ENCODE measurements at regions of chr1 and their contacts with region 1.

Region 1: DNA sequence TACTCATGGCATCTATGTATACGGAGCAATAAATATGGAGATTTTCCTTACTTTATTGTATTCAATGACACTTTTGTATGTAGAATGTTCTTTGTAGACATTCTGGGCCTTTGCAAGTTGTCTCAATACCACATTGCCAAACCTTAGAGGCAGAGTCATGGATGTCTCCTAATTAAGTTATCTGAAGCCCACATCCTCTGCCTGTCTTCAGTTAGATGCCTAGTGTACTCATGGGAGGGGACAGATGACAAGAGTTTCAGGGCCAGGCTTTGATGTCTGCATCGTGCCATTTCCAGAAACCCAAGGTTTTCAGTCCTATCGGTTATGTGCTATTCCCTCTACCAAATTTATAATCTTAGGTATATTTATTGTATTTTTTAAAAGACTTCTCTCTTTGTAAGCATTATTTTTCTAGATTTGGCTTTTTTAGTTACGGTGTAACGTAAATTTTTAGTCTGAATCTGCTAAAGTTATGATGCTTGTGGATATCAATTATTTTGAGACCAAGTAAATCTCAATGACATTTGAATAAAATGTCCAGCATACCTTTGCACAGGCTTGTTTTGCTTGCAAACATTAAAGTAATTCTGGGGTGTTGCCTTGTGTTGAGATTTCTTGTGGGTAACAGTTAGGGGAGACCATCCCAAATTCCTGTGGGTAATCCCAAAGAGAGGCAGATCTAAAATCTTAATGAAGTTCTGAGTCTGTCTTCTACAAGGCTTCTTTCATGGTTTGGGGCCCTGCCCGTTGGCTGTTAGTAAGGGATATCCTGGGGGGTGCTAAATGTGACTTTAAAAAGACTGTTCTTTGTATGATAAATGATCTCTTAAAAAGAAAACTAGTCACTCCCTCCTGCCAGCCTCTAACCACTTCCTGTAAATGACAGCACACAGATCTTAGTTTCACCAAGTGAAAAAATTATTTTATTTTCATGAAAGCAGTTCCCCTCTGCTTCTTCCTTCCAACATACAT is 8.0 kb upstream of the MACF1 start:
- DNase-seq: no peak

Region 2: DNA sequence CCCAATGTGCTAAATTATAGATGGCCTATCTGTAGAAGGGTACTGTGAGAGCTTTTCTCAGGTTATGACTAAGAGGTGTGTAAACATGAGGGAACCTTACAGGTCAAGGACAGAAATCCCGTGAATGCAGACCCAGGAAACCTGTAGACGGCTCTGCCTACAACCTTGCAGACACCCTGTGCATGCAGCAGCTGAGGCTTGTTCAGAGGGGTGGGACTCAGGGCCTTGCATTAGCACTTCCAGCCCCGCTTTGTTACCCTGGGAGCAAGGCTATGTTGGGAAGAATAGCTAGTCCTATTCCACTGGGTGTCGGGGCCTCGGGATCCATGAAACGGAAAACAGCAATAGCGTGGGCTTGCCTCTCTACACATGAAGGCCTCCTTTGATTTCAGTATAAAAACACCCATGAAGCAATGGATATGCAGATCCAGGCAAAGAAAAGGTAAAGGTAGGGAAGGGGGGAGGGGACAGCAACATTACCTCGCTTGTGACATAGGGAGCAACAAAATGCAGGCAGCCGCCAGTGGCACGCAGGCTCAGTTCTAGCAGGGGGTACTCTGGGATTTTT is 179.8 kb before region 1 on chr1:
- CTCF ChIA-PET with region 1: no interaction called
- POLR2A ChIA-PET with region 1: no interaction called
- DNase-seq: no peak

Region 3: GRCh38 chr1:39091845-39092645 is 104.5 kb before region 1 on chr1:
- CTCF ChIA-PET with region 1: interaction called, 10 read pairs
- POLR2A ChIA-PET with region 1: no interaction called
- DNase-seq: peak; percentile 46

Region 4: DNA sequence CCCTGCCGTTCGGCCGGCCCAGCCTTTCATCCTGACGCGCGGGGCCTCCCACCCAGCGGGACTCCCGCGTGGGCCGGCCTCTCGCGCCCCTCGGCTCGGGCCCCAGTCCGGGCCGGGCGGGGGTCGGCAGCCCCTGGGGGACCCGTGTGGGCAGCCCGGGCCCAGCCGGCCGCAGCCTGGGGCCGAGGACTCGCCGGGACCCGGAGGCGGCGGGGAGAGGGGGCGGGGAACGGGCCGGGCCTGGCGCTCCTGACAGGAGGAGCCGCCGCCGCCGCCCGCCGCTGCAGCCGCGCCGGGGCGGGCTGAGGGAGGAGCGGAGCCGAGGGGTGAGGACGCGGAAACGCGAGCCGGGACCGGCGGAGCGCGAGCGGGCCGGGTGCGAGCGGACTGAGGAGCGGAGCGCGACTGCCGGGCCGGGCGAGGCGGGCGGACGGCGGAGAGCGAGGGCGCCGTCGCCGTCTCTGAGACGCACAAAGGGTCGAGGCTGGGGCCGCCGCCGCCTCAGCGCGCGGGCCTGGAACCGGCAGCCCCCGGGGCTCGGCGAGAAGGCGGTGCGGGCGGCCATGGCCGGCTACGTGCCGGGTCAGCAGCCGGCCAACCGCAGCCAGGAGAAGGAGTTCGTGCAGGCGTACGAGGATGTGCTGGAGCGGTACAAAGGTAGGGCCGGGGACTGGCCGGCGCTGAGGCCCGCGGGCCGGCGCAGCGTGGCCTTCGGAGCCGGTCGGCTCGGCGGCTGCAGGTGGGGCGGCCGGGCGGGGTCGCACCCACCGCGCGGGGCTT is 91.3 kb before region 1 on chr1:
- CTCF ChIA-PET with region 1: interaction called, 30 read pairs
- POLR2A ChIA-PET with region 1: interaction called, 14 read pairs
- DNase-seq: peak; percentile 58

Region 5: DNA sequence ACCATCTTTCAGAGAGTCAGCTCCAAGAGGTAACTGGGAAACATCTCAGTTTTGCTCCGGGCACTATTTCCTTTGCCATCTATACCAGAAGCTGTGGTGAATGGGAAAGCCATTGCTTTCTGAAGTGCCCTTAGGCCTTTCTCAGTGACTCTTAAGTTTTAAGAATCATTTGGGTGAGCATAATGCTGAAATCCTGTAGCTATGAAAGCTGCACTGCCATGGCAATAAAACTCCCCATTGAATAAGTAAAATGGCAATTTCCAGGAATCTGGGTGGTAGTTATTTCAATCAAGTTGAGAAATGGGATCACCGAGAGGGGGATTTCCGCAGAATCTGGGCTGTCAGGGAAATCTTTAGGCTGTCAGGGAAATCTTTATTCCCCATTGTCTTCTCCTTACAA is 18.8 kb before region 1 on chr1:
- CTCF ChIA-PET with region 1: interaction called, 16 read pairs
- POLR2A ChIA-PET with region 1: no interaction called
- DNase-seq: no peak

Region 6: GRCh38 chr1:39214998-39215873 is 18.7 kb after region 1 on chr1:
- CTCF ChIA-PET with region 1: interaction called, 14 read pairs
- POLR2A ChIA-PET with region 1: no interaction called
- DNase-seq: no peak

Region 7: GRCh38 chr1:39469150-39469549 is 272.6 kb after region 1 on chr1:
- CTCF ChIA-PET with region 1: no interaction called
- POLR2A ChIA-PET with region 1: no interaction called
- DNase-seq: no peak

Measured in HEK293T (cell line).